ENCODE measurements at regions of chr2 and their contacts with region 1.

Region 1: GRCh38 chr2:102736410-102737409 is 25.1 kb upstream of the TMEM182 start:
- DNase-seq: peak; percentile 91
- ATAC-seq: peak; percentile 94
- H3K4me3 Mint-ChIP-seq: peak overlapping the region; percentile 96
- H3K27ac Mint-ChIP-seq: peak overlapping the region; percentile 91
- H3K4me1 Mint-ChIP-seq: peaks cover 31% of the 10 kb centered on the region
- H3K27me3 Mint-ChIP-seq: no peaks in the 10 kb centered on the region

Region 2: GRCh38 chr2:101751875-101752619 is 984.7 kb before region 1 on chr2:
- CTCF ChIA-PET with region 1: no interaction called
- POLR2A ChIA-PET with region 1: no interaction called
- intact Hi-C with region 1: no loop called
- DNase-seq: no peak
- ATAC-seq: no peak
- H3K4me3 Mint-ChIP-seq: no peak overlapping the region
- H3K27ac Mint-ChIP-seq: no peak overlapping the region
- H3K4me1 Mint-ChIP-seq: peaks cover 76% of the 10 kb centered on the region
- H3K27me3 Mint-ChIP-seq: no peaks in the 10 kb centered on the region

Region 3: GRCh38 chr2:102313025-102313424 is 423.7 kb before region 1 on chr2:
- CTCF ChIA-PET with region 1: no interaction called
- POLR2A ChIA-PET with region 1: no interaction called
- intact Hi-C with region 1: no loop called
- DNase-seq: no peak
- ATAC-seq: peak; percentile 23
- H3K4me3 Mint-ChIP-seq: no peak overlapping the region
- H3K27ac Mint-ChIP-seq: no peak overlapping the region
- H3K4me1 Mint-ChIP-seq: no peaks in the 10 kb centered on the region
- H3K27me3 Mint-ChIP-seq: peaks cover 4% of the 10 kb centered on the region

Region 4: GRCh38 chr2:102664471-102664909 is 72.2 kb before region 1 on chr2:
- CTCF ChIA-PET with region 1: no interaction called
- POLR2A ChIA-PET with region 1: no interaction called
- intact Hi-C with region 1: loop called in 1 of 2 experiments (anchors 2 kb)
- DNase-seq: peak; percentile 79
- ATAC-seq: peak; percentile 99
- H3K4me3 Mint-ChIP-seq: no peak overlapping the region
- H3K27ac Mint-ChIP-seq: peak overlapping the region; percentile 40
- H3K4me1 Mint-ChIP-seq: peaks cover 49% of the 10 kb centered on the region
- H3K27me3 Mint-ChIP-seq: no peaks in the 10 kb centered on the region

Region 5: GRCh38 chr2:102788885-102789260 is 52.2 kb after region 1 on chr2:
- CTCF ChIA-PET with region 1: no interaction called
- POLR2A ChIA-PET with region 1: no interaction called
- intact Hi-C with region 1: no loop called
- DNase-seq: no peak
- ATAC-seq: no peak
- H3K4me3 Mint-ChIP-seq: no peak overlapping the region
- H3K27ac Mint-ChIP-seq: no peak overlapping the region
- H3K4me1 Mint-ChIP-seq: no peaks in the 10 kb centered on the region
- H3K27me3 Mint-ChIP-seq: no peaks in the 10 kb centered on the region